ENCODE measurements at regions of chr17 and their contacts with region 1.

Region 1: GRCh38 chr17:66431910-66432683 is 129.7 kb downstream of the PRKCA start:
- H3K4me3 Mint-ChIP-seq: no peak overlapping the region
- H3K27ac Mint-ChIP-seq: peak overlapping the region; percentile 74
- H3K4me1 Mint-ChIP-seq: peaks cover 67% of the 10 kb centered on the region
- H3K27me3 Mint-ChIP-seq: no peaks in the 10 kb centered on the region

Region 2: GRCh38 chr17:66301797-66302741 is 130.0 kb before region 1 on chr17 and contains the start of gene PRKCA:
- intact Hi-C with region 1: loop called (anchors 10 kb)
- H3K4me3 Mint-ChIP-seq: peak within 1 kb of the TSS; percentile 95
- H3K27ac Mint-ChIP-seq: peak within 1 kb of the TSS; percentile 79
- H3K4me1 Mint-ChIP-seq: peaks cover 38% of the 10 kb centered on the region
- H3K27me3 Mint-ChIP-seq: peaks cover 36% of the 10 kb centered on the region

Region 3: GRCh38 chr17:66364990-66365490 is 67.1 kb before region 1 on chr17:
- intact Hi-C with region 1: no loop called
- H3K4me3 Mint-ChIP-seq: no peak overlapping the region
- H3K27ac Mint-ChIP-seq: no peak overlapping the region
- H3K4me1 Mint-ChIP-seq: peaks cover 14% of the 10 kb centered on the region
- H3K27me3 Mint-ChIP-seq: peaks cover 2% of the 10 kb centered on the region

Region 4: GRCh38 chr17:66466840-66467367 is 34.8 kb after region 1 on chr17:
- intact Hi-C with region 1: loop called (anchors 5 kb)
- H3K4me3 Mint-ChIP-seq: no peak overlapping the region
- H3K27ac Mint-ChIP-seq: no peak overlapping the region
- H3K4me1 Mint-ChIP-seq: peaks cover 68% of the 10 kb centered on the region
- H3K27me3 Mint-ChIP-seq: no peaks in the 10 kb centered on the region

Measured in dendritic cell treated with granulocyte-macrophage colony-stimulating factor and Interleukin-4, amounts not matched to agents 40 ng/mL and 50 ng/mL, for 4 days (primary cell).